Activated CD4-positive, alpha-beta T cell treated with anti-CD3 and anti-CD28 coated beads, Interleukin-2, amount 10 ng/mL, durations not matched to agents 24 days and 14 days (primary cell): ENCODE measurements at regions of chr17 and their contacts with region 1.

Region 1: DNA sequence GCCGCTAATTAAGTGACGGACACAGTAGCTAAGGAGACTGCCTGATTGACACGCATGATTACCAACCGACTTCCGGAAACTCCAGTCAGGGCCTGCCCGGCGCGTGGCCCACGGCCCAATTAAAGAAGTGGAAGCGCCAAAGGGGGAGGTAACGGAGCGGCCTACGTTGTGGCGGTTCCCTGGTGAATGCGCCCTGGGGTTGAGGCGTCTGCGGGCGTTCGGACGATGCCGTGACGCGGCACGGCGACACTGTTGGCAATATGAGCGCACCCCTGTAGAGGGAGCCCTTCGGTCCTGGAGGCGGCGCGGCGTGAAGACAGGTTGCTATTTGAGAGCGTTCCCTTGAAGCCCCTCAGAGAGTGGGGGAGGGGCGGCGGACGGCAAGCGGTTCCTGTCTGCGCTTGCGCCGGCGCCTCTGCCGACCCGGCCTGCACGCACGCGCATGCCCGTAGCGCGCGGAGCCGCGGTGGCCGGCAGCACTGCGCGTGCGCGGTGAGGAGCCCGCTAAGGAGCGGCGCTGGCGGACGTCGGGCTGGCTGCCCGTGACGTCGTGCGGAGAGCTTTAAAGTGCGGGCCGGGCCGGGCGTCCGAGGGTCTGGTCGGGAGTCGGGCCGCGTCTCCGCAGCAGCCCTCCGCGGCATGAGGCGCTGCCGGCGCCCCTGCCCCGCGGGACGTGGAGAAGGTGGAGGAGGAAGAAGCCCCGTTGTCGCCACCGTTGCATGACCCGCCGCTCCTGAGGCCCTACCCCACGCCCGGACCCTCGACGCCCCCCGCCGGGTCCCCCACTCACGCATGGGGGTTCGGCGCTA is at the start of gene ALKBH5:
- DNase-seq: peak; percentile 99
- H3K4me3 Mint-ChIP-seq: peak within 1 kb of the TSS; percentile 97
- H3K27ac Mint-ChIP-seq: peak within 1 kb of the TSS; percentile 99
- H3K4me1 Mint-ChIP-seq: peaks cover 56% of the 10 kb centered on the region
- H3K27me3 Mint-ChIP-seq: no peaks in the 10 kb centered on the region
- total RNA-seq, gene ALKBH5: 158 and 162 TPM in 2 replicates

Region 2: DNA sequence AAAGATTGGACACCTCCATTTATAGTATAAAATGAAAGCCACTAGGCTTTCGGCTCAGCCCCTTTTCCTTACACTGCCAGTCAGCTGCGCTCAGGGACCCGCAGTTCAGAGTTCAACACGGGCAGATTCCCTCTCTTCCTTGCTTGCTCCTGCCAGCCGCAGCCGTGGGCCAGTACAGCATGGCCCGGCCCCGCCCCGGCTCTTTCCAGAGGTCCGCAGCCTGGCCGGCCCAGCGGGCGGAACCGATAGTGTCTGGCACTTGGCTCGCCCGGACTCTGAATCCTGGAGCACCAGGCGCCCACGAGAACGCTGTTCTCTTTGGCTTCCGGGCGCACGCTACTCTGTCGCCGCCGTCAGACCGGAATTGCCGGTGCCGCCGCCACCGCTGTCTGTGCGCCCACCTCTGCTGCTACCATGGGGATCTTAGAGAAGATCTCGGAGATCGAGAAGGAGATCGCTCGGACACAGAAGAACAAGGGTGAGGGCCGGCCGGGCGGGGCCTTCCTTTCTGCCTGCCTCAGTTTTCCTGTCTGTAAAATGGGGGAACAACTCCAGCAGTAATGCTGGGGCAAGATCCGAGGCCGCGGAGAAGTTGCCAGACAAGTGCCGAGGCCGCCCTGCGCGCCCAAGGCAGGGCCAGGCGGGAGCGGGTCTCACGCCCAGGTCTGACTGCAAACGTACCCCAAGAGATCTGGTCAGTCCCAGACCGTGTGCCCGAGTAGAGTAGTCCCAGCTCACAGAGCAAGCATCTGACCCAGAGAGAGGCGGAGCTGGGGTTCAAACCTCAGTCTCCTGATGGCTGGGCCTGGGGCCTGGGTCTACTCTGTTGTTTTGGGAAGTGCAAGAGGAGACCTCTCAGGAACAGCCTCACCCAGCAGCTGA is 95.7 kb before region 1 on chr17 and contains the start of gene DRG2:
- intact Hi-C with region 1: loop called (anchors 2 kb)
- DNase-seq: peak; percentile 97
- H3K4me3 Mint-ChIP-seq: peak within 1 kb of the TSS; percentile 100
- H3K27ac Mint-ChIP-seq: peak within 1 kb of the TSS; percentile 99
- H3K4me1 Mint-ChIP-seq: peaks cover 26% of the 10 kb centered on the region
- H3K27me3 Mint-ChIP-seq: no peaks in the 10 kb centered on the region
- total RNA-seq, gene DRG2: 60.8 and 64.3 TPM in 2 replicates

Region 3: GRCh38 chr17:18158022-18158600 is 25.4 kb before region 1 on chr17:
- intact Hi-C with region 1: loop called (anchors 2 kb)
- DNase-seq: peak; percentile 97
- H3K4me3 Mint-ChIP-seq: peak overlapping the region; percentile 86
- H3K27ac Mint-ChIP-seq: peak overlapping the region; percentile 87
- H3K4me1 Mint-ChIP-seq: peaks cover 17% of the 10 kb centered on the region
- H3K27me3 Mint-ChIP-seq: no peaks in the 10 kb centered on the region

Region 4: DNA sequence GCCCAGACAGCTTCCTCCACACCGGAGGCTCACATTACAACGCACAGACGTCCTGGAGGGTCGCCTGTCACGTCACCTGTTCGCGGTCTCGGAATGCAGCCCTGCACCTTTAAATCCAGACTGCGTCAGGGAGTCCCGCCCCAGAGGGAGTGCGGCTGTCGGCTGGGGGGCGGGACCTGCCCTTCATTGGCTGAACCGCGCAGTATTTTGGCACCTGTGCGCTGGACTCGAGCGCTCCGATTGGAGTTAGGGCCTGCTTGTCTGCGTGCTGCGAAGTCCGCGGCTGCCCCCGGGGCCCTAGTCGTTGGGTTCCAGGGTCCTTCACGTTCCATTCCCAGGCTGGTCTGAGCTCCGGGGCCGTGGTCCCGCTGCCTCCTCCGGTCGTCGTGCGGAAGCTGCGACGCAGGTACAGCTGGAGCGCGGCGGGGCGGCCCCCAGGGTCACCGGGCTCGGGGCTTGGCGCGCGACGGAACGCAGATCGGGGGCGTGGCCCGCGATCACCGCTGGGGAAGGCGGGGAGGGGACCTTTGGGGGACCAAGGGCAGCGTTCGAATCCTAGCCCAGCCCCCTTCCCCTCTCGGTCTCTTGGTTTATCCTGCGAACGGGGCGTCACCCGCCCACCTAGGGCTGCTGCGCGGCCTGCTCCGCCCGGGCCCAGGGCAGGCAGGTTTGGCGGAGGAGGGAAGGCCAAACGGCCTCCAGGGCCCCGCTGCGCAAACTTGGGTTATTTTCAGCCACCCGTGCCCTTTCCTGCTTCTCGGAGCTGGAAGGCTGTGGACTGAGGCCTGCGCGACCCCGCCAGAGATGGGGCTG is 77.0 kb after region 1 on chr17 and contains the start of gene MIEF2:
- intact Hi-C with region 1: loop called (anchors 1 kb)
- DNase-seq: peak; percentile 98
- H3K4me3 Mint-ChIP-seq: peak within 1 kb of the TSS; percentile 85
- H3K27ac Mint-ChIP-seq: peak within 1 kb of the TSS; percentile 86
- H3K4me1 Mint-ChIP-seq: peaks cover 29% of the 10 kb centered on the region
- H3K27me3 Mint-ChIP-seq: no peaks in the 10 kb centered on the region
- total RNA-seq, gene MIEF2: 4.3 and 6.0 TPM in 2 replicates